ENCODE measurements at regions of chr14 and their contacts with region 1.

Region 1: GRCh38 chr14:34300882-34301734 is 160.9 kb downstream of the SPTSSA start:
- DNase-seq: no peak
- H3K4me3 Mint-ChIP-seq: no peak overlapping the region
- H3K27ac Mint-ChIP-seq: no peak overlapping the region
- H3K4me1 Mint-ChIP-seq: no peaks in the 10 kb centered on the region
- H3K27me3 Mint-ChIP-seq: peaks cover 1% of the 10 kb centered on the region

Region 2: DNA sequence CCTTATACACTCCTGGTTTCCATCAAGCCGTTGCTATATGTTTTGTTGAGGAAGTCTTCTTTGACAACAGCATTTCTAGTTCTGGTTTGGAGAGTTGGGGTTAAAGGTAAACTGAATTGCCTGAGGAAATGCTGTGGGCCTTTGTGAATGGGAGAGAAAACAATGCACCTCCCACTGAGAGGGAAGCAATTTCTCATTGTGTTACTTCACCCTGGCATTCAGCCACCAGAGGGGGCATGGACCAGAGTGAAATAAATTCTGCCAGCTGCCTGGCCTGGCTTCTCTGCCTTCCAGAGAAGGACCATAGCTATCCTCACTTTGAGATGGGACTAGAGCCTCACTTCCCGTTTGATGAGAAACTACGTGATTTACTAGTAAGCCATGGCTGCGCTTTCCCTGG is 825.5 kb before region 1 on chr14:
- intact Hi-C with region 1: loop called (anchors 5 kb)
- DNase-seq: no peak
- H3K4me3 Mint-ChIP-seq: no peak overlapping the region
- H3K27ac Mint-ChIP-seq: no peak overlapping the region
- H3K4me1 Mint-ChIP-seq: no peaks in the 10 kb centered on the region
- H3K27me3 Mint-ChIP-seq: peaks cover 4% of the 10 kb centered on the region

Region 3: GRCh38 chr14:34035177-34035933 is 265.8 kb before region 1 on chr14:
- intact Hi-C with region 1: no loop called
- DNase-seq: no peak
- H3K4me3 Mint-ChIP-seq: no peak overlapping the region
- H3K27ac Mint-ChIP-seq: no peak overlapping the region
- H3K4me1 Mint-ChIP-seq: peaks cover 36% of the 10 kb centered on the region
- H3K27me3 Mint-ChIP-seq: peaks cover 15% of the 10 kb centered on the region

Measured in activated T-helper 1 cell treated with anti-CD3 and anti-CD28 coated beads, Interleukin-12 subunit alpha, Interleukin-12 subunit beta, Interleukin-2, Interleukin-4 antibody, amounts not matched to agents 30 ng/mL and 10 ng/mL and 1 ng/mL, durations not matched to agents 14 hours and 24 hours and 36 hours (primary cell).